GM12878 (cell line): ENCODE measurements at regions of chr11 and their contacts with region 1.

Region 1: GRCh38 chr11:102495161-102496042 is 35.1 kb downstream of the MMP7 start:
- DNase-seq: peak; percentile 79
- ATAC-seq: peak; percentile 97
- H3K4me3 ChIP-seq: peak overlapping the region; percentile 34; the same call in 1 of the 2 replicates
- H3K27ac ChIP-seq: no peak overlapping the region
- H3K4me1 ChIP-seq: peaks cover 14% of the 10 kb centered on the region
- H3K27me3 ChIP-seq: 0 out of 4 replicates have a peak, but pooled peaks cover 0 to 3% of the 10 kb centered on the region in 2 experiments
- CTCF ChIP-seq: peak; percentile 53 to 78 (median 56); a peak in 5 of 6 replicates
- EP300 ChIP-seq: peak; percentile 67 to 68; a peak in 3 of 4 replicates
- POLR2A ChIP-seq: no peak
- RAD21 ChIP-seq: peak; percentile 90

Region 2: GRCh38 chr11:102293873-102294601 is 201.4 kb before region 1 on chr11:
- CTCF ChIA-PET with region 1: interaction called, 19 read pairs
- POLR2A ChIA-PET with region 1: no interaction called
- RAD21 ChIA-PET with region 1: interaction called, 11 read pairs
- SMC1A ChIA-PET with region 1: interaction called, 14 read pairs
- in situ Hi-C with region 1: no loop called
- intact Hi-C with region 1: no loop called
- DNase-seq: no peak
- ATAC-seq: peak; percentile 96
- H3K4me3 ChIP-seq: no peak overlapping the region
- H3K27ac ChIP-seq: 0 out of 2 replicates have a peak overlapping the region, but pooled peaks have one; percentile 8
- H3K4me1 ChIP-seq: peaks cover 12% of the 10 kb centered on the region
- H3K27me3 ChIP-seq: no peaks in the 10 kb centered on the region
- CTCF ChIP-seq: peak; percentile 77 to 81 (median 79)
- EP300 ChIP-seq: no peak
- POLR2A ChIP-seq: no peak
- RAD21 ChIP-seq: peak; percentile 84

Region 3: DNA sequence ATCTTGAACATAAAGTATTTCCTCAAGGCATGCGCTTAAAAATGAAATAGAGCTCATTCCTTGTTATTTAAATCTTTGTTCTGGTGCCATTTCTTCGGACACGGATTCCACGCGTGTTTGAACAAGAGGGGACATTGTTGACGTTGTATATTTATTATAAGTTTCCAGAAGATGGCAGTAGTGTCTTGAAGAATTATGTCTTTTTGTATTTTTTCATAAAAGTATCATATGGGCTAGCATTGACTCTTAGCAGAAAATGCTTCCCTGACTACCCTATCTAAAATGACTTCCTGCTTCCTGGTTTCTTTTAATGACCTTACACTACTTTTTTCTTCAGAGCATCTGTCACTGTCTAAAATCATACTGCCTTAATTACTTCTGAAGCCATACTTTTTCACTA is 128.0 kb before region 1 on chr11:
- CTCF ChIA-PET with region 1: interaction called, 20 read pairs
- POLR2A ChIA-PET with region 1: no interaction called
- RAD21 ChIA-PET with region 1: interaction called, 12 read pairs
- SMC1A ChIA-PET with region 1: interaction called, 21 read pairs
- in situ Hi-C with region 1: no loop called
- intact Hi-C with region 1: loop called (anchors 1 kb)
- DNase-seq: no peak
- ATAC-seq: peak; percentile 58
- H3K4me3 ChIP-seq: no peak overlapping the region
- H3K27ac ChIP-seq: no peak overlapping the region
- H3K4me1 ChIP-seq: peaks cover 11% of the 10 kb centered on the region; the same call in 1 of the 2 replicates
- H3K27me3 ChIP-seq: no peaks in the 10 kb centered on the region
- CTCF ChIP-seq: peak; percentile 2 to 25 (median 17); a peak in 2 of 6 replicates
- EP300 ChIP-seq: no peak
- POLR2A ChIP-seq: no peak
- RAD21 ChIP-seq: peak; percentile 40; the same call in 1 of the 2 replicates

Region 4: DNA sequence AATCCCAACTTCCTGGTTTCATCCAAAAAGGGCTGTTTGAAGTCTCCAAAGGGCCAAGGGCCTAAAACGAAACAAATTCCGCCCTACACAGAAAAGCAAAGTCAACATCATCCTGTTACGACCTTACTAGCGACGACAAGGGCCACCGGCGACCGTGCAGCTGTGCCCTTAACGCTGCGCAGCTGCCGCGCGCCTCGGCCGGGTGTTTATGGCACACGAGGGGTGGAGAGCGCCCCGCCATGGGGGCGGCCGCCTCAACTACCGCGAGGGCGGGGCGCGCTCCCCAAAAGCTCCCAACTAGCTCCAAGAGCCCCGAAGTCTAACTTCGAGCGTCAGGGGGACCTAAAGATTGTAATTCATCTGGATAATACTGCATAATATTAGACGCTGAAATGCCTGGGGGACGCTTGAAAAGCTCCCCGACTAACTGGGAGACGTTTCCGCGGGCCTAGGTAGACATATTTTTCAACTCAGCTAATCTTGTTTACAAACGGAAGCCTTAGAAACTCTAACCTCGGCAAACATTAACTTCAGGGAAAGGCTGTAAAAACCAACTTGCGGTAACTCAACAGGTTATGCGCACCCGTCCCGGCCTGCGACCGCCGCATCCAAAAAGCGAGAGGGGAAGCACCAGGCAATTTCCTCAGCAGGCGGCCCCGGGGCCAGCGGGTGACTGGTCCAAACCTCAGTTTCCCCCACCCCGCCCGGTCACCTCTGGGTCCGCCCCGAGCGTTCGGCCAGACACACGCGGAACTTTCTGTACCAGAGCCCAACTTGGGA is 43.5 kb before region 1 on chr11:
- CTCF ChIA-PET with region 1: interaction called, 6 read pairs
- POLR2A ChIA-PET with region 1: no interaction called
- RAD21 ChIA-PET with region 1: interaction called, 6 read pairs
- SMC1A ChIA-PET with region 1: interaction called, 8 read pairs
- in situ Hi-C with region 1: no loop called
- intact Hi-C with region 1: loop called (anchors 2 kb)
- DNase-seq: no peak
- ATAC-seq: peak; percentile 75
- H3K4me3 ChIP-seq: peak overlapping the region; percentile 75
- H3K27ac ChIP-seq: peak overlapping the region; percentile 79
- H3K4me1 ChIP-seq: peaks cover 17% of the 10 kb centered on the region; the same call in 1 of the 2 replicates
- H3K27me3 ChIP-seq: no peaks in the 10 kb centered on the region
- CTCF ChIP-seq: peak; percentile 27 to 44 (median 35); a peak in 3 of 6 replicates
- EP300 ChIP-seq: no peak
- POLR2A ChIP-seq: peak; percentile 84
- RAD21 ChIP-seq: peak; percentile 20; the same call in 1 of the 2 replicates

Region 5: GRCh38 chr11:102513869-102514268 is 18.5 kb after region 1 on chr11:
- CTCF ChIA-PET with region 1: interaction called, 10 read pairs
- POLR2A ChIA-PET with region 1: interaction called, 6 read pairs
- RAD21 ChIA-PET with region 1: interaction called, 9 read pairs
- SMC1A ChIA-PET with region 1: interaction called, 10 read pairs
- in situ Hi-C with region 1: no loop called
- intact Hi-C with region 1: no loop called
- DNase-seq: no peak
- ATAC-seq: no peak
- H3K4me3 ChIP-seq: no peak overlapping the region
- H3K27ac ChIP-seq: no peak overlapping the region
- H3K4me1 ChIP-seq: no peaks in the 10 kb centered on the region
- H3K27me3 ChIP-seq: no peaks in the 10 kb centered on the region; a peak in 1 of 4 replicates
- CTCF ChIP-seq: no peak
- EP300 ChIP-seq: no peak
- POLR2A ChIP-seq: no peak
- RAD21 ChIP-seq: no peak

Region 6: GRCh38 chr11:102530558-102530957 is 35.2 kb after region 1 on chr11 and contains the start of gene MMP7:
- CTCF ChIA-PET with region 1: interaction called, 5 read pairs
- POLR2A ChIA-PET with region 1: no interaction called
- RAD21 ChIA-PET with region 1: interaction called, 4 read pairs
- SMC1A ChIA-PET with region 1: interaction called, 10 read pairs
- in situ Hi-C with region 1: no loop called
- intact Hi-C with region 1: no loop called
- DNase-seq: no peak
- ATAC-seq: peak; percentile 71
- H3K4me3 ChIP-seq: no peak within 1 kb of the TSS
- H3K27ac ChIP-seq: no peak within 1 kb of the TSS
- H3K4me1 ChIP-seq: no peaks in the 10 kb centered on the region
- H3K27me3 ChIP-seq: no peaks in the 10 kb centered on the region
- CTCF ChIP-seq: no peak
- EP300 ChIP-seq: 0 out of 4 replicates have a peak, but pooled peaks of 1 of the 2 experiments have one; percentile 9
- POLR2A ChIP-seq: no peak
- RAD21 ChIP-seq: no peak
- polyA plus RNA-seq, gene MMP7: 1.6 to 1.7 TPM

Region 7: GRCh38 chr11:102546923-102547471 is 51.6 kb after region 1 on chr11:
- CTCF ChIA-PET with region 1: interaction called, 11 read pairs
- POLR2A ChIA-PET with region 1: no interaction called
- RAD21 ChIA-PET with region 1: interaction called, 10 read pairs
- SMC1A ChIA-PET with region 1: interaction called, 7 read pairs
- in situ Hi-C with region 1: no loop called
- intact Hi-C with region 1: no loop called
- DNase-seq: peak; percentile 93
- ATAC-seq: peak; percentile 81
- H3K4me3 ChIP-seq: no peak overlapping the region
- H3K27ac ChIP-seq: peak overlapping the region; percentile 68; the same call in 1 of the 2 replicates
- H3K4me1 ChIP-seq: peaks cover 37% of the 10 kb centered on the region
- H3K27me3 ChIP-seq: no peaks in the 10 kb centered on the region
- CTCF ChIP-seq: peak in 1 of 3 experiments; percentile 3; a peak in 1 of 6 replicates
- EP300 ChIP-seq: peak; percentile 93 to 95; a peak in 3 of 4 replicates
- POLR2A ChIP-seq: no peak
- RAD21 ChIP-seq: peak; percentile 32; the same call in 1 of the 2 replicates